Transverse colon (tissue), 4 donors: ENCODE measurements at regions of chr11 and their contacts with region 1.

Region 1: DNA sequence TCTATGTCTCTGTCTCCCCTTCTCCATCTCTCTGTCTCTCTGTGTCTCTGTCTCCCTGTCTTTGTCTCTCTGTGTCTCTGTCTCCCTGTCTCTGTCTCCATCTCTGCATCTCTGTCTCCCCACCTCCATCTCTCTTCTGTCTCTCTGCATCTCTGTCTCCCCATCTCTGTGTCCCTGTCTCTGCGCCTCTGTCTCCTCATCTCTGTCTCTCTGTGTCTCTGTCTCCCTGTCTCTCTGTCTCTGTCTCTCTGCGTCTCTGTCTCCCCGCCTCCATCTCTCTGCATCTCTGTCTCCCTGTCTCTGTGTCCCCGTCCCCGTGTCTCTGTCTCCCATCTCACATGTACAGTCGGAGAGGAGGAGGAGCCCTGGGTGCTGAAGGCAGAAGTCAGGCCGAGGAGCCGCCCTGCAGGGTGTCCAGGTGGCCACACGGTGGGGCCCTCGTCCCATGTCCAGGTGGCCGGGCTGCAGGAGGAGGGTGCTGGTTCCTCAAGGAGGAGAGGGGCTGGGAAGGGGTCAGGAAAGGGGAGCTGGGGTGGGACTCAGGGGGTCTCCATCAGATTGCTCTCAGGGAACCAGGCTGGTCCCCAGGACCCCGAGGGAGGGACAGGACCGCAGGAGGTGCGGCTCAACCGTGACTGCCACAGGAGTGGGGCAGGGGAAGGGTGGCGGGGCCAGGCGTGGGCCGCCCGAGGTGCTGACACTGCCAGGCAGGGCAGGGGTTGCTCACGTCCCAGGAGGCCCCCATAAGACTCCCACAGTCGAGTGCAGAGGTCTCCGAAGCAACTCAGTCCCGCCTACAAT is 25.6 kb upstream of the TH start:
- DNase-seq: peak; percentile 83
- H3K4me3 ChIP-seq: no peak overlapping the region
- H3K27ac ChIP-seq: no peak overlapping the region
- H3K4me1 ChIP-seq: peaks cover 0 to 7% (median 5%) of the 10 kb centered on the region in 4 donors
- H3K27me3 ChIP-seq: peaks cover 10% of the 10 kb centered on the region
- CTCF ChIP-seq: peak; percentile 83 to 93 (median 90)
- EP300 ChIP-seq: no peak
- POLR2A ChIP-seq: no peak

Region 2: DNA sequence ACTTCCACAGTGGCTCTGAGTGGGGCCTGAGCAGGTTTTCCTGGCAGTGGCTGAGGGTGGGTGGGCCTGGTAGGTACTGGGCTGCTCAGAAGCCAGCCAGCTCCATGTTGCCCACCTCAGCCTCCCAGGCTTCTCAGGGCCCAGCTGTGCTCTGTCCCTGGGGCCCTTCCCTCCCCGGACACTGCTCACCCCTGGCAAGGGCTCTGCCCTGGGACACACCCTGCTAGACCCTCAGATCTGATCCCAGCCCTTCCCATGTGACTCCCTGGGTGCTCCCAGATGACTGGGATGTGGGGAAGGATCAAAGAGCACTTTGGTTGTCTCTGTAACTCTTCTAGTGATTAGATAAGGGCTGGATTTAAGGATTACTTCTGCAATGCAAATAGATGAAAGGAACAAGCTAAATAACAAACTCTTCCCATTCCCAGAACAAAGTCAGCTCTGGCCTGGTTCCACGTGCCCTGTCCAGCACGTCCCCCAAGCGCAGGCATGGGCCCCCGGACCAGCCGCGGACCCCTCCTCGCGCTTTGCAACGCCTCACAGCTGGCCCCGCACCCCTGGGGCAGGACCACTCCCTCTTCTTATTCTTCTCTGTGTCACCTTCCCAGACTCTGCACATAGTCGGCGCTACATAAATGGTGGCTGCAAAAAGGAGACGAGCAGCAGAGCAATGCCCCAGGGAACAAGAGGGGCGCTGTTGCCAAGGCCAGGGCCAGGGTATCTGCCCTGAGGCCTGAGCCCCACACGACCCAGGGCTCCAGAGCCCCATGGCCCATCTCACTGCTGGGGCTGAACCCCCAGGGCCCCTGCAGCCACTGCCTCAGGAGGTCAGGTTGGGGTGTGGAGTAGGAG is 505.9 kb before region 1 on chr11:
- in situ Hi-C with region 1: no loop called
- intact Hi-C with region 1: no loop called
- DNase-seq: no peak
- H3K4me3 ChIP-seq: no peak overlapping the region
- H3K27ac ChIP-seq: no peak overlapping the region
- H3K4me1 ChIP-seq: peaks cover 6 to 13% (median 11%) of the 10 kb centered on the region in 4 donors
- H3K27me3 ChIP-seq: peaks cover 13% of the 10 kb centered on the region
- CTCF ChIP-seq: no peak
- EP300 ChIP-seq: no peak
- POLR2A ChIP-seq: no peak

Region 3: DNA sequence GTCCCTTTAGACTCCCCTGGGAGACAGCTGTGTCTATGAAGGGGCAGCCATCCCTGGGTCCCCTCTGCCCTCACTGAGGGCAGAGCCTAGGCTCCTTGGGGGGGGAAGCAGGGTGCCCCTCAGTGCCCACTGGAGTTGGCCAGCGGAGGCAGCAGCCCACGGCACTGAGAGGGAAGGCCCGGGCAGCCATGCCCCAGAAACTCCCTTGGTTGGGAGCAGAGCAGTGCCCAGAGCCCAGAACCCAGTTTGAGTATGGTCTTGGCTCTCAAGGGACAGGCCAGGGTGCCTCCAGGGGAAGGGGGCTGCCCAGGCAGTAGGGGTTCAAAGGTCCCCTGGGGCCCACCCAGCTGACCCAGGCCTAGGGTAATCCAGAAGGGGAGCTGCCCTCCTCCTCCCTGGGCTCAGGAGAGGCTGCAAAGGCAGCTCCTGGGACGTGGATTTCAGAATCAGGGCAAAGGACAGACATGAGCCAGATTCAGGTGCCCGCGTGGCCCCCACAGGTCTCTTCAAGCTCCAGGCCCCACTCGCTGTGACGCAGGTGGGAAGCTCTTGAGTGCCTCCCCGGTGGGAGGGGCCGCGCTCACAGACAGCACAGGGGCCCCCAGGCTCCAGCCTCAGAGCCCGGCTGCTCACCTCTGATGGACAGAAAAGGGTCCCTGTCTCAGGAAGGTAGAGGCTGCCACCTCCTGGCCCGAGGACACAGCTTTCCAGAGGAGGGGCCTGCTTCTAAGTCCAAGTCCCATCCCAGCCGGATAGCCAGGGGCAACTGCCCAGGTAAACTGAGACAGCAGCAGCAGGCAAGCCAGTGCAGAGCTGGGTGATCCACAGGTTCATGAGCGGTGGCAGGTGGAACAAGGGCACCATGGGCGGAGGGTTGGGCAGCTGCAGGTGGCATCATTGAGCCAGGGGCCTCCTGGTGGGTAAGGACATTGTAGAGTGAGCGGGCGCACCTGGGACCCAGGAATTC is 101.9 kb after region 1 on chr11:
- in situ Hi-C with region 1: loop called in 3 of 4 experiments (anchors 10 to 25 kb)
- intact Hi-C with region 1: loop called (anchors 5 kb)
- DNase-seq: peak; percentile 44
- H3K4me3 ChIP-seq: no peak overlapping the region
- H3K27ac ChIP-seq: no peak overlapping the region
- H3K4me1 ChIP-seq: peaks cover 0 to 20% (median 5%) of the 10 kb centered on the region in 4 donors
- H3K27me3 ChIP-seq: no peaks in the 10 kb centered on the region
- CTCF ChIP-seq: peak in 4 of 5 experiments; percentile 30 to 50 (median 39)
- EP300 ChIP-seq: no peak
- POLR2A ChIP-seq: no peak

Region 4: GRCh38 chr11:2400069-2400760 is 203.0 kb after region 1 on chr11 and contains the start of gene TSSC4:
- in situ Hi-C with region 1: loop called in 1 of 4 experiments (anchors 25 kb)
- intact Hi-C with region 1: no loop called
- DNase-seq: peak; percentile 100
- H3K4me3 ChIP-seq: peak within 1 kb of the TSS; percentile 84 to 99 (median 92)
- H3K27ac ChIP-seq: peak within 1 kb of the TSS; percentile 95 to 99 (median 98)
- H3K4me1 ChIP-seq: peaks cover 15 to 26% (median 23%) of the 10 kb centered on the region in 4 donors
- H3K27me3 ChIP-seq: no peaks in the 10 kb centered on the region
- CTCF ChIP-seq: peak; percentile 76 to 99 (median 97)
- EP300 ChIP-seq: peak; percentile 98
- POLR2A ChIP-seq: peak; percentile 95
- total RNA-seq, gene TSSC4: 13.3 to 38.9 (median 36.0) TPM

Region 5: GRCh38 chr11:2526808-2527381 is 329.7 kb after region 1 on chr11:
- in situ Hi-C with region 1: no loop called
- intact Hi-C with region 1: loop called (anchors 10 kb)
- DNase-seq: peak; percentile 87
- H3K4me3 ChIP-seq: peak overlapping the region in 2 of 4 donors; percentile 9 to 33
- H3K27ac ChIP-seq: peak overlapping the region; percentile 74 to 80 (median 77)
- H3K4me1 ChIP-seq: peaks cover 11 to 26% (median 23%) of the 10 kb centered on the region in 4 donors
- H3K27me3 ChIP-seq: no peaks in the 10 kb centered on the region
- CTCF ChIP-seq: peak; percentile 20 to 72 (median 31)
- EP300 ChIP-seq: no peak
- POLR2A ChIP-seq: no peak